ENCODE measurements at regions of chr1 and their contacts with region 1.

Region 1: GRCh38 chr1:32619701-32620485 is 30.5 kb downstream of the ZBTB8OS start:
- DNase-seq: no peak
- ATAC-seq: peak; percentile 31
- H3K4me3 Mint-ChIP-seq: no peak overlapping the region
- H3K27ac Mint-ChIP-seq: no peak overlapping the region
- H3K4me1 Mint-ChIP-seq: peaks cover 16% of the 10 kb centered on the region
- H3K27me3 Mint-ChIP-seq: no peaks in the 10 kb centered on the region
- CTCF ChIP-seq: no peak

Region 2: GRCh38 chr1:32521165-32521564 is 98.7 kb before region 1 on chr1:
- CTCF ChIA-PET with region 1: interaction called, 8 read pairs
- POLR2A ChIA-PET with region 1: no interaction called
- intact Hi-C with region 1: loop called (anchors 1 kb)
- DNase-seq: no peak
- ATAC-seq: no peak
- H3K4me3 Mint-ChIP-seq: peak overlapping the region; percentile 82
- H3K27ac Mint-ChIP-seq: no peak overlapping the region
- H3K4me1 Mint-ChIP-seq: peaks cover 5% of the 10 kb centered on the region
- H3K27me3 Mint-ChIP-seq: no peaks in the 10 kb centered on the region
- CTCF ChIP-seq: no peak